CD8-positive, alpha-beta T cell (primary cell): ENCODE measurements at regions of chr2 and their contacts with region 1.

Region 1: GRCh38 chr2:14125624-14126293 is 506.8 kb upstream of the LRATD1 start:
- DNase-seq: no peak
- ATAC-seq: no peak
- H3K4me3 ChIP-seq: no peak overlapping the region
- H3K4me3 Mint-ChIP-seq: no peak overlapping the region
- H3K27ac ChIP-seq: no peak overlapping the region
- H3K27ac Mint-ChIP-seq: no peak overlapping the region
- H3K4me1 ChIP-seq: no peaks in the 10 kb centered on the region
- H3K4me1 Mint-ChIP-seq: no peaks in the 10 kb centered on the region
- H3K27me3 ChIP-seq: no peaks in the 10 kb centered on the region
- H3K27me3 Mint-ChIP-seq: no peaks in the 10 kb centered on the region
- CTCF ChIP-seq: no peak

Region 2: DNA sequence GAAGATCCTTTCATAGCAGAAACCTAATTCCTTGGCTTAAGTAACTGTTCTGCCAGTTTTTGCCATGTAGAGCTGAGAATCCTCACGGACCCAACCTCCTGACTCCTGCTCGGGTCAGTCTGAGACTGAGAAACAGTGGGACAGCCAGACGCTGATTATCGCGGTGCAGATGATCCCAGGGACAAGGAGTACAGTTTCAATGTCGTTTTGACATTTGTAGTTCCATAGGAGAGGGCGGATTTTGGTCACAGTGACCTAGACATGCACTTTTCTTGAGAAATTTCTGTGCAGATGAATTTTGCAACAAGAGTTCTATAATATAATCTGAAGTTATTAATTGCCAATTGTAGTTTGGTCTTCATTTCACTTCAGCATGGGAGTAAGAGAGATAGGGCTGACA is 53.0 kb after region 1 on chr2:
- CTCF ChIA-PET with region 1: no interaction called
- POLR2A ChIA-PET with region 1: no interaction called
- intact Hi-C with region 1: loop called in 1 of 2 experiments (anchors 1 kb)
- DNase-seq: no peak
- ATAC-seq: no peak
- H3K4me3 ChIP-seq: no peak overlapping the region
- H3K4me3 Mint-ChIP-seq: no peak overlapping the region
- H3K27ac ChIP-seq: no peak overlapping the region
- H3K27ac Mint-ChIP-seq: no peak overlapping the region
- H3K4me1 ChIP-seq: no peaks in the 10 kb centered on the region
- H3K4me1 Mint-ChIP-seq: no peaks in the 10 kb centered on the region
- H3K27me3 ChIP-seq: no peaks in the 10 kb centered on the region
- H3K27me3 Mint-ChIP-seq: no peaks in the 10 kb centered on the region
- CTCF ChIP-seq: no peak